Activated CD8-positive, alpha-beta T cell treated with anti-CD3 and anti-CD28 coated beads for 36 hours (primary cell): ENCODE measurements at regions of chr13 and their contacts with region 1.

Region 1: GRCh38 chr13:72727417-72728289 is at the starts of genes BORA and MZT1:
- DNase-seq: peak; percentile 97
- ATAC-seq: peak; percentile 93
- H3K4me3 Mint-ChIP-seq: peak within 1 kb of the TSS; percentile 93
- H3K27ac Mint-ChIP-seq: peak within 1 kb of the TSS; percentile 92
- H3K4me1 Mint-ChIP-seq: peaks cover 45% of the 10 kb centered on the region
- H3K27me3 Mint-ChIP-seq: no peaks in the 10 kb centered on the region
- CTCF ChIP-seq: no peak
- total RNA-seq, gene BORA: 16.8 to 17.5 TPM
- total RNA-seq, gene MZT1: 31.1 to 34.5 TPM

Region 2: GRCh38 chr13:72781451-72782439 is 54.1 kb after region 1 on chr13 and contains the starts of genes DIS3 and PIBF1:
- CTCF ChIA-PET with region 1: no interaction called
- POLR2A ChIA-PET with region 1: interaction called, 4 read pairs
- intact Hi-C with region 1: loop called (anchors 5 kb)
- DNase-seq: peak; percentile 98
- ATAC-seq: peak; percentile 98
- H3K4me3 Mint-ChIP-seq: peak within 1 kb of the TSS; percentile 92
- H3K27ac Mint-ChIP-seq: peak within 1 kb of the TSS; percentile 99
- H3K4me1 Mint-ChIP-seq: peaks cover 48% of the 10 kb centered on the region
- H3K27me3 Mint-ChIP-seq: no peaks in the 10 kb centered on the region
- CTCF ChIP-seq: peak; percentile 23
- total RNA-seq, gene DIS3: 51.6 to 52.0 TPM
- total RNA-seq, gene PIBF1: 26.2 to 29.7 TPM

Region 3: DNA sequence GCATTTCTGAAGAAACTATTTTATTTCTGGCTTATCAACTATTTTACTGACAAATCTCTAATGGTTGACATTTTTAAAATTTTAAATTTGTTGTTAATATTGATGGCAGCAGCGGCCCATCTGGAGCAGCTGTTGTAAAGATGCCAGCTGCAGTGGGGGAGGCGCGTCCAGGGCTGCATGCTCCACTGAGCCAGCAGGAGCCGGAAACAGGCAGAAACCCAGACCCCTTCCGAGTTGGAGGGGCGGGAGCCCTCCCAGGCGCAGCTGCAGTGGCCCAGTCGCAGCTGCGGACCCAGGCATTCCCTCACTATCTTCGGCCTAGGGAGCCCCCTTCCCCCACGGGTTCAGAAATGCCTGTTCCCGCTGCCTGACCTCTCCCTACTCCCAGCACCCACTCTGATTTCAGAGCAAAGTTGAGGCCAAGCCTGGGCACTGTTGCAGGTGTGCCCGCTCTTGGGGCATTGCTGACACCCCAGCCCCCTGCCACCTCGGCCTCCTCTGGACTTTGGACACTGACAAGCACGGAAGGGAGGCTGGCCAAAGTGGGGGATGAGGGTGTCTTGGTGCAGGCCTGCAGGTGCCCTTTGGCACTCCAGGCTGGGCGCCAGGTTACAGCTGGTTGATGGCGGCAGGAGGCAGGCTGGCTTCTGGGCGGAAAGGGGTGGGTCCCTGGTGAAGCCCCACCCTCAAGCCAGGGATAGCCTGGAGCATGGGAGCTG is 123.5 kb after region 1 on chr13:
- CTCF ChIA-PET with region 1: no interaction called
- POLR2A ChIA-PET with region 1: no interaction called
- intact Hi-C with region 1: no loop called
- DNase-seq: no peak
- ATAC-seq: no peak
- H3K4me3 Mint-ChIP-seq: no peak overlapping the region
- H3K27ac Mint-ChIP-seq: no peak overlapping the region
- H3K4me1 Mint-ChIP-seq: no peaks in the 10 kb centered on the region
- H3K27me3 Mint-ChIP-seq: no peaks in the 10 kb centered on the region
- CTCF ChIP-seq: no peak

Region 4: DNA sequence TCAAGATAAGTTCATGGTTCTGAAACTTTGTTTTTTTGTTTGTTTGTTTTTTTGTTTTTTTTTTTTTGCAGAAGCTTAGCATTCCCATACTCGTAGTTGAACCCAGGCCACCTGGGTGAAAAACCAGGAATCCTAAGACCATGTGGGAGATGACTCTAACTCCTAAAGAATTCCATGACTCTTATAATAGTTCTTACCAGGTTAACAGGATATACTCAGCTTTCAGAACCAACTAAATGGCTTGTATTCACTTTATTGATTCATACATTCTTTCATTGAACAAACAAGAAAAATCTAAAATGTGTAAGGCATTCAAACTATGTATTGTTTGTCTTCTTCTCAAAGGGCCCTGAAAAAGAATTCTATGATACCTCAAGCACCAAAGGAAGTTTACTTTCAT is 290.7 kb after region 1 on chr13:
- CTCF ChIA-PET with region 1: no interaction called
- POLR2A ChIA-PET with region 1: no interaction called
- intact Hi-C with region 1: no loop called
- DNase-seq: no peak
- ATAC-seq: no peak
- H3K4me3 Mint-ChIP-seq: no peak overlapping the region
- H3K27ac Mint-ChIP-seq: no peak overlapping the region
- H3K4me1 Mint-ChIP-seq: no peaks in the 10 kb centered on the region
- H3K27me3 Mint-ChIP-seq: no peaks in the 10 kb centered on the region
- CTCF ChIP-seq: no peak